A549 (cell line): ENCODE measurements at regions of chr20 and their contacts with region 1.

Region 1: GRCh38 chr20:12970372-12970821 is 38.4 kb upstream of the SPTLC3 start:
- DNase-seq: peak; percentile 20 to 63
- ATAC-seq: peak; percentile 69 to 80
- H3K4me3 ChIP-seq: no peak overlapping the region
- H3K27ac ChIP-seq: no peak overlapping the region
- H3K4me1 ChIP-seq: peaks cover 16% of the 10 kb centered on the region
- CTCF ChIP-seq: peak; percentile 94
- EP300 ChIP-seq: no peak
- POLR2A ChIP-seq: no peak
- RAD21 ChIP-seq: peak; percentile 95 to 97

Region 2: DNA sequence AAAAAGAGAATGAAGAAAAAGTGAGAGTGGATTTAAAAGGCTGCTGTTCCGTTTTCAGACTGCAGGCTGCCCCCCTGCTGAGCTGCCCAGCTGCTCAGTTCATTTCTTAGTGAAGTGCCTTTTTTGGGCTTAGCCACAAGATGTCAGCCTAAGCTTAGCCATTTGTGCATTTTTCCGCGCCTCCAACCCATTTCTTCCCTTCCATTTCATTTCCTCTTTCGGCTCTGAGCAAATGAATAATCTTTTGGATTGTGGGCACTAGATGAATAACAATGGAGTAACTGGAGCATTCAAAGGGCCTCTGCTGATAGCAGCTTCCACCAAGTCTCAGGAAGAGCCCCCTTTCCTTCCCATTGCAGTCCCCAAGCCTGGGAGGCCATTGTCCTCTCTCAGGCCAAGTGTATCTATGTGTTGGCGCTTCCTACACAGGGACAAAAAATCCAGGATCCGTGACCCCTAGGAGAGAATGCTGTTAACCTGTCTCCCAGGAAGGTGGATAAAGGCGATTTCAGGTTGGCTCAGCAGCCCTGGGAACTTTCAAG is 45.1 kb before region 1 on chr20:
- CTCF ChIA-PET with region 1: interaction called, 604 read pairs
- POLR2A ChIA-PET with region 1: no interaction called
- DNase-seq: peak; percentile 81 to 88
- ATAC-seq: peak; percentile 85 to 93
- H3K4me3 ChIP-seq: no peak overlapping the region
- H3K27ac ChIP-seq: peak overlapping the region; percentile 19 to 52; a peak in 2 of 6 replicates
- H3K4me1 ChIP-seq: peaks cover 29% of the 10 kb centered on the region
- CTCF ChIP-seq: peak; percentile 99
- EP300 ChIP-seq: no peak
- POLR2A ChIP-seq: no peak
- RAD21 ChIP-seq: peak; percentile 99

Region 3: GRCh38 chr20:12956303-12956702 is 14.1 kb before region 1 on chr20:
- CTCF ChIA-PET with region 1: interaction called, 31 read pairs
- POLR2A ChIA-PET with region 1: no interaction called
- DNase-seq: no peak
- ATAC-seq: no peak
- H3K4me3 ChIP-seq: no peak overlapping the region
- H3K27ac ChIP-seq: no peak overlapping the region
- H3K4me1 ChIP-seq: peaks cover 5% of the 10 kb centered on the region
- CTCF ChIP-seq: no peak
- EP300 ChIP-seq: no peak
- POLR2A ChIP-seq: no peak
- RAD21 ChIP-seq: no peak

Region 4: GRCh38 chr20:13094976-13095375 is 124.6 kb after region 1 on chr20:
- CTCF ChIA-PET with region 1: interaction called, 149 read pairs
- POLR2A ChIA-PET with region 1: no interaction called
- DNase-seq: no peak
- ATAC-seq: no peak
- H3K4me3 ChIP-seq: no peak overlapping the region
- H3K27ac ChIP-seq: no peak overlapping the region
- H3K4me1 ChIP-seq: no peaks in the 10 kb centered on the region
- CTCF ChIP-seq: no peak
- EP300 ChIP-seq: no peak
- POLR2A ChIP-seq: no peak
- RAD21 ChIP-seq: no peak

Region 5: DNA sequence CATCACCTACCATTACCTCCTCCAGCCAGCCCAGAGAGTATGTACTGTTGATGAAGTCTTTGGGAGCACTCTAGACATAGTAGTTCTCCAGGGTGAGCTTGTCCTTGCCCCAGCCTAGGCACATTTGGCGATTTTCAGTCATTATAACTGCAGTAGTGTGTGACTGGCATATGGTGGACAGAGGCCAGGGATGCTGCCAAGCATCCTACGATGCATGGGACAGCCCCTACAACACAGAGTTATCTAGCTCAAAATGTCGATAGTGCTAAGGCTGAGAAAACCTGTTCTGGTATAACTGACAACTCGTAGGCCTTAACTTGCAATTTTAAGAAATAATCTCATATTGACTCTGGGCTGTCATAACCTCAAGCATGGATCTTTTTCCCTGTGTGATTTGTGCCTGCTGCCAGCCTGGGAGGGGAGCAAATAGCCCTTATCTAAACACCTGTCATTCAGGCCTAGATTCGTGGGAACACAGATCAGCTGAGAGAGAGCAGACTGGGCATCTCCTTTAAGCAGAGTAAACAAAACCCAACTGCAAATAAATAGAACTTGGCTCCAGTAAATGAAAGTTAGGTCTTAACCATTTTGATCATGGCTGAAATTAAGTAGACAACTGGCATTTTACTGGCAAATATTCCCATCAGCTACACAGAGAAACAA is 141.0 kb after region 1 on chr20:
- CTCF ChIA-PET with region 1: interaction called, 72 read pairs
- POLR2A ChIA-PET with region 1: no interaction called
- DNase-seq: no peak
- ATAC-seq: no peak
- H3K4me3 ChIP-seq: no peak overlapping the region
- H3K27ac ChIP-seq: no peak overlapping the region
- H3K4me1 ChIP-seq: no peaks in the 10 kb centered on the region
- CTCF ChIP-seq: no peak
- EP300 ChIP-seq: no peak
- POLR2A ChIP-seq: no peak
- RAD21 ChIP-seq: no peak

Region 6: GRCh38 chr20:13771853-13772453 is 801.6 kb after region 1 on chr20:
- CTCF ChIA-PET with region 1: interaction called, 10 read pairs
- POLR2A ChIA-PET with region 1: no interaction called
- DNase-seq: peak; percentile 25 to 36
- ATAC-seq: peak in 1 of 2 experiments; percentile 61; a peak in 3 of 6 replicates
- H3K4me3 ChIP-seq: no peak overlapping the region
- H3K27ac ChIP-seq: no peak overlapping the region
- H3K4me1 ChIP-seq: no peaks in the 10 kb centered on the region
- CTCF ChIP-seq: peak; percentile 64; the same call in 2 of the 3 replicates
- EP300 ChIP-seq: no peak
- POLR2A ChIP-seq: no peak
- RAD21 ChIP-seq: peak; percentile 56 to 65